ENCODE measurements at regions of chr14 and their contacts with region 1.

Region 1: GRCh38 chr14:76500011-76500410 is 124.1 kb downstream of the ESRRB start:
- DNase-seq: peak; percentile 74

Region 2: GRCh38 chr14:76467711-76468155 is 32.3 kb before region 1 on chr14:
- intact Hi-C with region 1: loop called in 1 of 2 experiments (anchors 2 kb)
- DNase-seq: peak; percentile 47

Region 3: GRCh38 chr14:76615331-76615730 is 115.3 kb after region 1 on chr14:
- intact Hi-C with region 1: no loop called
- DNase-seq: no peak